ENCODE measurements at regions of chr9 and their contacts with region 1.

Region 1: GRCh38 chr9:119020730-119021333 is 348.4 kb downstream of the BRINP1 start:
- DNase-seq: no peak
- ATAC-seq: no peak

Region 2: GRCh38 chr9:119033596-119033995 is 12.8 kb after region 1 on chr9:
- intact Hi-C with region 1: loop called (anchors 1 kb)
- DNase-seq: no peak
- ATAC-seq: no peak

Measured in Right ventricle myocardium inferior (tissue), 1 donor.